Mucosa of descending colon (tissue), 3 donors: ENCODE measurements at regions of chr3 and their contacts with region 1.

Region 1: GRCh38 chr3:135895106-135895733 is 70.3 kb upstream of the PPP2R3A start:
- DNase-seq: peak in 2 of 3 donors; percentile 76 to 88
- ATAC-seq: peak; percentile 63
- H3K4me3 ChIP-seq: no peak overlapping the region
- H3K4me1 ChIP-seq: no peaks in the 10 kb centered on the region
- CTCF ChIP-seq: peak; percentile 23

Region 2: GRCh38 chr3:134600685-134601463 is 1294.3 kb before region 1 on chr3:
- intact Hi-C with region 1: loop called in 1 of 2 experiments (anchors 10 kb)
- DNase-seq: peak; percentile 66 to 73 (median 66)
- ATAC-seq: peak; percentile 76
- H3K4me3 ChIP-seq: no peak overlapping the region
- H3K4me1 ChIP-seq: no peaks in the 10 kb centered on the region
- CTCF ChIP-seq: peak; percentile 90

Region 3: DNA sequence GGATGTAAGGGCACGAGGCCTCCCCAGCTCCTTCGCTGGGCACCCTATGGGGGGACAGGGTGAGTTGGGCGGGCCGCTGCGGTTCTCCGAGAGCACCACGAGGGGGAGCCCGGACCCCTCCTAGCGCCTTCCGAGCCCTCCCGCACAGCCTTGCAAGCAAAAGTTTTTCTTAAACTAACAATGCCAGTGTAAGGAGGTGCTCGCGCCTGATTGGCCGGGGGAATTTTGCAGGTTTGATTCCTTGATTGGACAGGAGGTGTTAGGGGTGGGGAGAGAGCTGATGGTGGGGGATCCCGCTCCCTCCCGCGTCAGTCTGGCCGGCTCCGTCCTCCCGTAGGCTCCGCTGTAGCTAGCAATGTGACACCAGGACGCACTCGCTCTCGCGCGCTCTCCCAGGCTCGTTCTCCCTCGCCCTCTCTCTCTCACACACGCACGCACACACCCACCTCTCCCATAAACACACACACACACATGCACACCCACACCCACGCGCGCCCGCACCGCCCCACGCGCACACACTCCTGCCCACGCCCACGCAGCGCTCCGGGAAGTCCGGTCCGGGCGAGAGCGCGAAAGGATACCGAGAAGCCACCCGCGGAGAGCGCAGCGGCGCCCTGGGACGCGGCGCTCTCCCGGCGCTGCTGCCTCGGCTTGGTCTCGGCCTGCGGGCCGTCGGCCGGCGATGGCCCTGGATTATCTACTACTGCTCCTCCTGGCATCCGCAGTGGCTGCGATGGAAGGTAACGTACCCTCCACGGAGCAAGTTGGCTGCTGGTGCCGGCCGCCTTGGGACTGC is 1100.1 kb before region 1 on chr3 and contains the start of gene EPHB1:
- intact Hi-C with region 1: loop called in 1 of 2 experiments (anchors 10 kb)
- DNase-seq: peak; percentile 66 to 74 (median 74)
- ATAC-seq: peak; percentile 86
- H3K4me3 ChIP-seq: no peak within 1 kb of the TSS
- H3K4me1 ChIP-seq: peaks cover 13% of the 10 kb centered on the region
- CTCF ChIP-seq: peak; percentile 66
- total RNA-seq, gene EPHB1: 0.31 to 6.9 (median 0.64) TPM

Region 4: DNA sequence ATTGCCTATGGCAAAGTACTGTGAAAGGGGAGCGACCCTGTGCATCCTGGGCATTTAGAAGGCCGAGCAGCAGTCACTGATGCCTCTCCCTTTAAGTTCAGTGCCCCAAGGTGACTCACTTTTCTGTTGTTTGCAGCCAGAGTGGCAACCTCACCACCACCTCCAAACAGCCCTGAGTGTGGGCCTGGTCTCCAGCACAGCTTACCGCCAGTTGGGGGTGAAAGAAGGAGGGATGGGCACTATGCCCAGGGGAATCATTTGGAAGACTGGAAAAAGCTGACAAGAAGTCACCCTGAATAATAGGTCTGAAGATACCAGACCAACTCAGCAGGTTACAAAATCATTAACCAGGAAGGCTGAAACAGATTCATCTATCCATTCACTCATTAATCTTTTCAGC is 528.4 kb before region 1 on chr3:
- intact Hi-C with region 1: no loop called
- DNase-seq: no peak
- ATAC-seq: no peak
- H3K4me3 ChIP-seq: no peak overlapping the region
- H3K4me1 ChIP-seq: no peaks in the 10 kb centered on the region
- CTCF ChIP-seq: no peak

Region 5: GRCh38 chr3:135736740-135737139 is 158.5 kb before region 1 on chr3:
- intact Hi-C with region 1: loop called in 1 of 2 experiments (anchors 1 kb)
- DNase-seq: peak in 1 of 3 donors; percentile 79
- ATAC-seq: peak; percentile 47
- H3K4me3 ChIP-seq: no peak overlapping the region
- H3K4me1 ChIP-seq: no peaks in the 10 kb centered on the region
- CTCF ChIP-seq: no peak

Region 6: DNA sequence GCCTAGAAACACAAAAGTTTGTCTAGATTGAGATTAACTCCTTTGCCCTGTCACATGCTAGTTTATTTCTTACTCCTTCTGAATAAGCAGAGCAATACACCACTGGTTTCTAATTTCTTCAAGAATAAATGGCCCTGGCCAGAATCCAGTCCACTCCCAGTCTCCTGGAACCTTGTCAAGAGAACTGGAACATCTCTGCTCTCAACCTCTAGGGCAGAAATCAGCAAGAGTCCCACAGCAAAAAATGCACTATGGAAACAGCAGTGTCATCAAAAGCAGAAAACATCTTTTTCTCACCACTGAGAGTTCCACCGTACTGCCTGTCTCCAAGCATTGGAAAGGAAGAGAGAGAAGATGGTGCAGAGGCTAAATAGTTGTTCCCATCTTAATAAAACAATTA is 34.5 kb after region 1 on chr3:
- intact Hi-C with region 1: no loop called
- DNase-seq: peak in 1 of 3 donors; percentile 40
- ATAC-seq: no peak
- H3K4me3 ChIP-seq: no peak overlapping the region
- H3K4me1 ChIP-seq: no peaks in the 10 kb centered on the region
- CTCF ChIP-seq: no peak